Common myeloid progenitor, CD34-positive (primary cell): ENCODE measurements at regions of chr3 and their contacts with region 1.

Region 1: GRCh38 chr3:111691293-111691909 is 96.3 kb upstream of the ZBED2 start:
- DNase-seq: peak; percentile 60 to 72 (median 67)
- H3K4me3 ChIP-seq: no peak overlapping the region
- H3K27ac ChIP-seq: no peak overlapping the region
- H3K4me1 ChIP-seq: peaks cover 0 to 19% (median 3%) of the 10 kb centered on the region in 4 experiments
- H3K27me3 ChIP-seq: no peaks in the 10 kb centered on the region

Region 2: DNA sequence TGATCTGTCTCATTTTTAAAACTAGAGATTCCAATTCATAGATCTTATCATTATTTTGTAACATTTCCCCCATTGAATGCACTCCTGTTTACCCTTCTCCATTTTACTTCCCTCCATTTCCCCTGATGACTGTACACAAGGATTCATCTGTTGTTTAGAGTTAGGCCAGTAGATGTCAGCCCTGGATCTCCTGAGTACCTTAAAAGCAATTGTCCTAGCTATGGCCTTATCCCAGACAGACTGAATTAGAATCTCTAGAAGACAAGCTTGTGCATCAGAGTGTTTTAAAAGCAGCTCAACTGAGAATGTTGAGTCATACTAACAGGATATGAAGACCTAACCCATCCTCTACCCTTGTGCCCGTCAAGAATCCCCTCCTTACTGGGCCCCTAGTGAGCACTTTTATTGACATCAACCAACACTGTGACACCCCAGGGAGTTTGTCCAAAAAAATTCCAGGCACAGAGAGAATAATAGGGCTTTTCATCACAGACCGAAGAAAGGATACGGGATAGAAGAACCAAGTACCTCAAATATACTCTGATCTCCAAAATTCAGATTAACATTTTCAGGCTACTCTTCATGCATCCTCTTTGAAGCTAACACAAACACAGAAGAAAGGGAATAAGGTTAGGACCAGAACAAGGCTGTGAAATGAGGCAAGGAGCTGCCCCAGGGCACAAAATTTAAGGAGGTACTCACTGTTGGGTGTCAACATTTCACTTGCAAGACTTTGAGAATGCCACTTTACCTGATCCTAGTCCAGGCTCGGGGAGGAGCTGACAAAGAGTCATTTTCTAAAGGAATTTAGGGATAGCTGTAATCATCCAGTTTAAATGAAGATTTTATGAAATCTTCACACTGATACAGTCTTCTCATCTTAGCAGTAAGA is 113.4 kb before region 1 on chr3:
- CTCF ChIA-PET with region 1: interaction called, 56 read pairs
- POLR2A ChIA-PET with region 1: no interaction called
- DNase-seq: peak; percentile 71 to 83 (median 80)
- H3K4me3 ChIP-seq: no peak overlapping the region
- H3K27ac ChIP-seq: no peak overlapping the region
- H3K4me1 ChIP-seq: peaks cover 0 to 23% (median 3%) of the 10 kb centered on the region in 4 experiments
- H3K27me3 ChIP-seq: no peaks in the 10 kb centered on the region